Caco-2 (cell line): ENCODE measurements at regions of chr7 and their contacts with region 1.

Region 1: DNA sequence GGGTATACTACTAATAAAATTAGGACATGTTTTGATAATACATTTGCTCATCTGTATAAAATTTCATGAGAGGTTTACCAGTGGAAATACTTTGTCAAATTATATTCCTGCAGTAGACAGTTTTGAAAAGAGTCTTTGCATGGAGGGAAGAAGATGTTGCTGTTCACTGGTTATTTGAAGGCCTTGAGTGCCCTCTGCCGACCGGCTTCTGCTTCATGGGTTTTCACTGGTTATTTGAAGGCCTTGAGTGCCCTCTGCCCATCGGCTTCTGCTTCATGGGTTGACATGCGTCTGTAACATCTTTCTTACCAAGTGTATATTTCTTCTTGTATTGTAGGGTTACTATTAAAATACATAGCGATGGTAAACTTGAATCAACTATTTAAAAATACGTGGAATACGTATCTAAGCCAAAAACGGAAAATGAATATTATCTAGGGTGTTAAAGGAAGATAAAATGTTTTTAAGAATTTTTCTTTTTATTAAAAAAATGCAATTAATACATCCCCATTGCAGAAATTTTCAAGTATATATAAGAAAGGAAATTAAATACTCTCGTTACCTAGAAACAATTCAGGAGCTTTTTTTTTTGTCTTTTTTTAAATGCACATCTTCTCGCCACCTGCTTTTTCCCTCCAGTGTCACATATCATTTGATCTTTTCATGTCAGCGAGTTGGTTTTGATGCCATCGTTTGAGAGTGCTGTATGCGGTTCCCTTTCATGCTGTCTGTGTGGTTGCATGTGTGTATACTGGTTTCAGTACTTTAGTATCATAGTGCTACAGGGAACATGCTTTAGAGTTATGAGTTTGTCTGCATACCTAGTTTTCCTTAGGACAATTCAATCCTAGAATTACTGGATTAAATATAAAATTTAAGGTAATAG is 73.4 kb downstream of the SHH start:
- DNase-seq: peak; percentile 77 to 79
- H3K4me3 ChIP-seq: no peak overlapping the region
- H3K4me3 Mint-ChIP-seq: no peak overlapping the region
- H3K27ac Mint-ChIP-seq: no peak overlapping the region
- H3K4me1 ChIP-seq: no peaks in the 10 kb centered on the region
- H3K4me1 Mint-ChIP-seq: no peaks in the 10 kb centered on the region
- H3K27me3 ChIP-seq: no peaks in the 10 kb centered on the region
- H3K27me3 Mint-ChIP-seq: no peaks in the 10 kb centered on the region
- CTCF ChIP-seq: peak; percentile 76 to 82

Region 2: DNA sequence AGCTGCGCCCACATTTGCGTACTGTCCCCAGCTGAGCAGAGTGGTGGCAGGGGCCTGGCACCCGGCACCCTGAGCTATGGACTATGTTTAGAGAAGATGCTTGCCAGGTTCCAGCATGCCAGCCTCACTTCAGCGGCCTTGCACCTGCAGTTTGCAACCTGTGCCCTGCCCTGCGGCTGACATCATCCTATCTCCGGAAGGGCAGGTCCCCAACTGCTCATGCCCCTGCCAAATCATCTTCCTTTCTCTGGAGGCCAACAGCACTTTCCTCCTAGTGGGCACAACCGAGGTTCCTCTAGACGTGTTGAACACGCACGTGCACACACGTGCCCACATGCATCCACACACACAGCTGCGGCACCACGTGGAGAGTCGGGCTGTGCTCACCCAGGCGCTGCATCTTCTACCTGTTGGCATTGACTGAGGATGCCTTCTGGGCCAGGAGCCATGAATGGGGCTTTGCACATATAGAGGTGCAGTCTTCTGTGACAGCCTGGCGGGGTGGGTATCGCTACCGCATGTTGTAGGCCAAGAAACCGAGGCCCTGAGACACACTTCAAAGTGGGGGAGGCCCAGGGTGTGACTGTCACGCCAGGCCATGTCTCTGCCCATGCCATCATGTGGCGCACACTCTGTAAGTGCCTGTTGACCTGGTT is 217.0 kb before region 1 on chr7:
- CTCF ChIA-PET with region 1: no interaction called
- POLR2A ChIA-PET with region 1: no interaction called
- intact Hi-C with region 1: no loop called
- DNase-seq: no peak
- H3K4me3 ChIP-seq: no peak overlapping the region
- H3K4me3 Mint-ChIP-seq: no peak overlapping the region
- H3K27ac Mint-ChIP-seq: no peak overlapping the region
- H3K4me1 ChIP-seq: no peaks in the 10 kb centered on the region
- H3K4me1 Mint-ChIP-seq: no peaks in the 10 kb centered on the region
- H3K27me3 ChIP-seq: no peaks in the 10 kb centered on the region; the same call in 1 of the 2 replicates
- H3K27me3 Mint-ChIP-seq: peaks cover 11% of the 10 kb centered on the region
- CTCF ChIP-seq: no peak

Region 3: DNA sequence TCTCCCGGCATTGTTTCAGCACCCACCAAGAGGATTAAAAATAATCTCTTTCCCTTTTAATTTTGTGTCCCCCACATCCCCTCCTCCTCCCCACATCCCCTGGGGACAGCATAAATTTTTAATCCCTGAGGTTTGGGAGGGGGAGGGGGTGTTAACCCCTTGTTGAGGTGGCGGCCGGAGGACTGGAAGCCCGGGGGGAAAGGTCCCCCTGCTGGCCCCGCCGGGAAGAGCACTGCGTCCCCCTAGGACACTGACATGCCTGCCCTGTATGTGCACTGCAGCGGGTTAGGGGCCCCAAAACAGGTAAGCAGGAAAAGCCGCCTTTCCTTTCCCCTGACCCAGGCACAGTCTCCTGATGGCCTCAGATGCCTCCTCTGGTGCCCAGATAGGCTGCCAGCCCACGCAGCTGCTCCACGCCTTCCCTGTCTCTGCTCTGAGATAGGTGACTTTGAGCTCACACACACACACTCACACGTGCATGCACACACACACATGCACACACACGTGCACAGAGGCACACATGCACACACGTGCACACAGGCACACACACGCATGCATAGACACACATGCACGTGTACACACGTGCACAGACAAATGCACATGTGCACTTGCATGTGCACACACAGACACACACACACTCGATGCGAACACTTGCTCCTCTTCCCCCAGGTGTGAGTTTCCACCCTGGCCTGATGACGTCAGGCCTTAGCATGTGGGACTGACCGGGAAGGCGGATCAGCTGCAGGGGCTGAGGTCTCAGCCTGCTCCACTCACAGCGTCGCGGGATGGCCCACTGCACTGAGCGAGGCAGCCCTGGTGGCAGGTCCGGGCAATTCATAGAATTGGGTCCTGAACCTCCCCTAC is 204.8 kb before region 1 on chr7:
- CTCF ChIA-PET with region 1: no interaction called
- POLR2A ChIA-PET with region 1: no interaction called
- intact Hi-C with region 1: loop called (anchors 5 kb)
- DNase-seq: peak in 1 of 2 experiments; percentile 41
- H3K4me3 ChIP-seq: no peak overlapping the region; the same call in 1 of the 2 replicates
- H3K4me3 Mint-ChIP-seq: peak overlapping the region; percentile 55
- H3K27ac Mint-ChIP-seq: no peak overlapping the region
- H3K4me1 ChIP-seq: peaks cover 18% of the 10 kb centered on the region; the same call in 1 of the 2 replicates
- H3K4me1 Mint-ChIP-seq: peaks cover 7% of the 10 kb centered on the region
- H3K27me3 ChIP-seq: no peaks in the 10 kb centered on the region
- H3K27me3 Mint-ChIP-seq: peaks cover 3% of the 10 kb centered on the region
- CTCF ChIP-seq: peak; percentile 49 to 60

Region 4: DNA sequence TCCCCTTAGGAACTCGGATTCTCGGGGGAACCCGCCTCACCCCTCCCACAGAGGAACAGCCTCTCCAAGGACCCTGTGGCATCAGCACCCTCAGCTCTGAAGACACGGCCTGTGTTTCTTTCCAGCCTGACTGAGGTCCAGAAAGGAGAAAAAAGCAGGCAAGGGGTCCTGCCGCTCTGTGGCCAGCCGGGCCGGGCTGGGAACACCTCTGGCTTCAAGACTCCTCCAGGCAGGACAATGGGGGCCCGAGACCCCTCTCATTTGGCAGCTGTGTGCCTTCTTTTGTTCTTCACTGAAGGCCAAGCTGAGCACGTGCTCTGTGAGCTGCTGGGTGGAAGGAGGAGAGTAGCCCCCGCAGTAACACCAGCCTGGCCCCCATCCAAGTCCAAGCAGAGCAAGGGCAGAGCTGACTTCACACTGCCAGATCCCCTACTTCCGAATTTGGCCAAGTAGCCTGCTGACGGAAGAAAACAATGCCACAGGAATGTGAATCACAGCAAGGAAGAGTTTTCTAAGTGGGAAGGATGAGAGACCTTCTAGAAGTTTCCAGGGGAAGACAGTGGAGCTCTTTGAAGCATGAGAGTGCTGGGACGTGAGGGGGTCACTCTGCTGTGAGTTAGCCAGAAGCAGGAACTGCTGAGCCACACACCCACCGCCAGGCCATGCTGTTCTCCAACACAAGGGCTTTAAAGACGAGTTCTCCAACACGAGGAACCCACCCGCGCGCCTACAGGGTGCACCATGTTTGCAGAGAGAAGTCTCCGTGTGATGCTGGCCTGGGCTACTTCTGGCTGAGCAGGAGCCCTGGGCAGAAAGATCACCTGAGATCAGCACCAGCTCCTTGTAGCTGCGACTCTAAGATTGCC is 195.7 kb before region 1 on chr7:
- CTCF ChIA-PET with region 1: no interaction called
- POLR2A ChIA-PET with region 1: no interaction called
- intact Hi-C with region 1: loop called (anchors 1 kb)
- DNase-seq: no peak
- H3K4me3 ChIP-seq: no peak overlapping the region
- H3K4me3 Mint-ChIP-seq: no peak overlapping the region
- H3K27ac Mint-ChIP-seq: no peak overlapping the region
- H3K4me1 ChIP-seq: no peaks in the 10 kb centered on the region
- H3K4me1 Mint-ChIP-seq: no peaks in the 10 kb centered on the region
- H3K27me3 ChIP-seq: no peaks in the 10 kb centered on the region; the same call in 1 of the 2 replicates
- H3K27me3 Mint-ChIP-seq: no peaks in the 10 kb centered on the region
- CTCF ChIP-seq: peak in 1 of 2 experiments; percentile 23

Region 5: GRCh38 chr7:155685070-155685790 is 53.7 kb before region 1 on chr7:
- CTCF ChIA-PET with region 1: no interaction called
- POLR2A ChIA-PET with region 1: no interaction called
- intact Hi-C with region 1: no loop called
- DNase-seq: no peak
- H3K4me3 ChIP-seq: no peak overlapping the region
- H3K4me3 Mint-ChIP-seq: no peak overlapping the region
- H3K27ac Mint-ChIP-seq: no peak overlapping the region
- H3K4me1 ChIP-seq: no peaks in the 10 kb centered on the region
- H3K4me1 Mint-ChIP-seq: no peaks in the 10 kb centered on the region
- H3K27me3 ChIP-seq: no peaks in the 10 kb centered on the region
- H3K27me3 Mint-ChIP-seq: no peaks in the 10 kb centered on the region
- CTCF ChIP-seq: no peak